AG04450 (cell line): ENCODE measurements at regions of chr6 and their contacts with region 1.

Region 1: GRCh38 chr6:4055420-4056041 is 23.4 kb downstream of the FAM217A start:
- DNase-seq: peak; percentile 39
- H3K4me3 ChIP-seq: no peak overlapping the region
- H3K27ac ChIP-seq: peak overlapping the region; percentile 40
- H3K27me3 ChIP-seq: no peaks in the 10 kb centered on the region
- CTCF ChIP-seq: peak; percentile 44

Region 2: GRCh38 chr6:4021133-4021853 is 34.2 kb before region 1 on chr6:
- CTCF ChIA-PET with region 1: interaction called, 6 read pairs
- POLR2A ChIA-PET with region 1: interaction called, 14 read pairs
- DNase-seq: peak; percentile 91
- H3K4me3 ChIP-seq: peak overlapping the region; percentile 91
- H3K27ac ChIP-seq: peak overlapping the region; percentile 95
- H3K27me3 ChIP-seq: no peaks in the 10 kb centered on the region
- CTCF ChIP-seq: peak; percentile 33; the same call in 1 of the 2 replicates